ENCODE measurements at regions of chr7 and their contacts with region 1.

Region 1: DNA sequence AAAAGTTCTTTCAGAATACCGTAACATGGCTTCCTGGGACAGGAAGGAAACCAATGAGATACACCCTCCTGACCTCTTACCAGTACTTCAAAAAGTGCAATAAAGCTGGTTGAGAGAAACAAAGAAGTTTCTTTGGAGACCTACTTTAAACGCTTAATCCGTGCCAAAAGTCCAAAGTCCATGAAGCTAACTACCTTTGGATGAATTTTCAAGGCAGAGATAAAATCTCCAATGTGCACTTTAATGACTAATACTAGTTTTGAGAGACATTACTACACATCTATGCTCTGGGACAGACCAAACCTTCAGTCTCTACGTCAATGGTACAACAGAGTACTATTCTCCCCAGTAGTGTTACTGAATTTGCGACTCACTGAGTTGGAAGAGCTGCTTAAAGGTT is 46.1 kb downstream of the UBE2H start:
- DNase-seq: no peak
- H3K4me3 Mint-ChIP-seq: no peak overlapping the region
- H3K27ac Mint-ChIP-seq: peak overlapping the region; percentile 53
- H3K4me1 Mint-ChIP-seq: peaks cover 75% of the 10 kb centered on the region
- H3K27me3 Mint-ChIP-seq: no peaks in the 10 kb centered on the region

Region 2: GRCh38 chr7:129845178-129845971 is 61.3 kb before region 1 on chr7:
- CTCF ChIA-PET with region 1: no interaction called
- POLR2A ChIA-PET with region 1: no interaction called
- intact Hi-C with region 1: loop called (anchors 10 kb)
- DNase-seq: no peak
- H3K4me3 Mint-ChIP-seq: no peak overlapping the region
- H3K27ac Mint-ChIP-seq: no peak overlapping the region
- H3K4me1 Mint-ChIP-seq: peaks cover 50% of the 10 kb centered on the region
- H3K27me3 Mint-ChIP-seq: no peaks in the 10 kb centered on the region

Region 3: DNA sequence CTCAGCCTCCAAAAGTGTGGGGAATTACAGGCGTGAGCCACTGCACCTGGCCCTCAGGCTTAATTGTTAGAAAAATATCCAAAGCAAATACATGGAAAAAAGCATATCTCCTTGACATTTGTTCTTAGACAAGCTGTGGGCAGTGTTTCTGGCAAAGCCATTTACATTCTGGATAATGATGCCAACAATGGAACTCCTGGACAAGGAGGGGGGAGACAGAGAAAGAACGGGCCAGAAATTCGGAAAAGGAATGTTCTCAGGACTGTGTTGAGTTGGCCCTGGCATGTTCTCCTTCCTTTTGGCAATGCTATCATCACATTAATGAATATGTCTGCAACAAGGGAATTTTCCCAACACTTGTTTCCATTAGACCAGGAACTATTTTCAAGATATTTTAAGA is 42.7 kb before region 1 on chr7:
- CTCF ChIA-PET with region 1: no interaction called
- POLR2A ChIA-PET with region 1: no interaction called
- intact Hi-C with region 1: loop called (anchors 5 kb)
- DNase-seq: no peak
- H3K4me3 Mint-ChIP-seq: no peak overlapping the region
- H3K27ac Mint-ChIP-seq: no peak overlapping the region
- H3K4me1 Mint-ChIP-seq: peaks cover 55% of the 10 kb centered on the region
- H3K27me3 Mint-ChIP-seq: no peaks in the 10 kb centered on the region

Measured in activated CD4-positive, alpha-beta memory T cell treated with anti-CD3 and anti-CD28 coated beads for 36 hours (primary cell).